ENCODE measurements at regions of chr2 and their contacts with region 1.

Region 1: GRCh38 chr2:19362755-19363473 is 4.5 kb upstream of the OSR1 start:
- DNase-seq: peak; percentile 70
- H3K4me3 Mint-ChIP-seq: peak overlapping the region; percentile 92
- H3K27ac Mint-ChIP-seq: no peak overlapping the region
- H3K4me1 Mint-ChIP-seq: peaks cover 28% of the 10 kb centered on the region
- H3K27me3 Mint-ChIP-seq: peaks cover 56% of the 10 kb centered on the region

Region 2: GRCh38 chr2:18387441-18388206 is 975.3 kb before region 1 on chr2:
- CTCF ChIA-PET with region 1: no interaction called
- intact Hi-C with region 1: loop called (anchors 5 kb)
- DNase-seq: peak; percentile 74
- H3K4me3 Mint-ChIP-seq: no peak overlapping the region
- H3K27ac Mint-ChIP-seq: no peak overlapping the region
- H3K4me1 Mint-ChIP-seq: no peaks in the 10 kb centered on the region
- H3K27me3 Mint-ChIP-seq: no peaks in the 10 kb centered on the region

Region 3: DNA sequence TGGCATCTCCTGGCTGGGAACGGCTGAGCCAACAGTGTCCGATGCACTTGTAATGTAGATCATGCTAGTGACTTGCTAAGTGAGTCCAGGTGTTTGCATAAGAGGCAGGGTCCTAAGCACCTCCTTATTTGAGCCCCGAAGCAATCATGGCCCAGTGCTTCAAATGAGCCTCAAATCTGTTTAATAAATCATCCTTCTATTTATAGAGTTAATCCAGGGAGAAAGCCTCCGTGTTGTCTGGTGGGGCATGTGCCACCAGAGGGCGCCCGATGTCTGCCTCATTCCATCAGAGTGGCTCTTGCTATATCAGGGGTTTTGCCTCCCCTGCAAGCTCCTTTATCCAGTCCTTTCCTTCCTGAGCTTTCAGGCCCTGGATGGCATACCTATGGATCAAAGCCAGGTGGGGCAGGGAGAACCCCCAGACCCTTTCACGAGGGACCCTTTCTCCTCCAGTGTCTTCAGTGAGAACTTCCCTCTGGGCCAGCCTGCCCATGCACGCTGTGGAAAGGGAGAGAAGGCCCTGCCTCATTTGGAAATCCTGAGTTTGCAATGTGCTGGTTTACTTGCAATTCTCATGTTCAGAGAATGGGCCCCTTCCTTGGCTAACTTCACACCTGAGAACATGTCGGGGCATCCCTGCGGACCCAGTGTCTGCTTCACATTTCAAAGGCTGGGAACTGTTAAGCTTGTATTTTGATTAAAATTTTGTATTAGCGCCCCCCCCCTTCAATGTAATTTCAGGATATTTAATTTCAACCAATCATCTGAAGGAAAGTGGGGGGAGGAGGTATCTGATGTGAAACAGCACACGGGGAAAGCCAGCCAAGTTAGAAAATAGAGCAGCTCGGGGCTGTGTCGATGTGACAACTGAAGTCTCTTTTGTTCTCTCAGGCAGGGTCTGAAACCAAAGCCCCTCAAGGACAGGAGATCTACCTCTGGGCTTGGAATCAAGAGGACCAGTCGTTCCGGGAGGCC is 842.2 kb before region 1 on chr2:
- CTCF ChIA-PET with region 1: interaction called, 4 read pairs
- intact Hi-C with region 1: loop called (anchors 1 kb)
- DNase-seq: peak; percentile 81
- H3K4me3 Mint-ChIP-seq: no peak overlapping the region
- H3K27ac Mint-ChIP-seq: no peak overlapping the region
- H3K4me1 Mint-ChIP-seq: no peaks in the 10 kb centered on the region
- H3K27me3 Mint-ChIP-seq: peaks cover 18% of the 10 kb centered on the region

Region 4: GRCh38 chr2:18749912-18750526 is 612.9 kb before region 1 on chr2:
- CTCF ChIA-PET with region 1: no interaction called
- intact Hi-C with region 1: loop called (anchors 1 kb)
- DNase-seq: peak; percentile 75
- H3K4me3 Mint-ChIP-seq: no peak overlapping the region
- H3K27ac Mint-ChIP-seq: no peak overlapping the region
- H3K4me1 Mint-ChIP-seq: no peaks in the 10 kb centered on the region
- H3K27me3 Mint-ChIP-seq: no peaks in the 10 kb centered on the region

Region 5: DNA sequence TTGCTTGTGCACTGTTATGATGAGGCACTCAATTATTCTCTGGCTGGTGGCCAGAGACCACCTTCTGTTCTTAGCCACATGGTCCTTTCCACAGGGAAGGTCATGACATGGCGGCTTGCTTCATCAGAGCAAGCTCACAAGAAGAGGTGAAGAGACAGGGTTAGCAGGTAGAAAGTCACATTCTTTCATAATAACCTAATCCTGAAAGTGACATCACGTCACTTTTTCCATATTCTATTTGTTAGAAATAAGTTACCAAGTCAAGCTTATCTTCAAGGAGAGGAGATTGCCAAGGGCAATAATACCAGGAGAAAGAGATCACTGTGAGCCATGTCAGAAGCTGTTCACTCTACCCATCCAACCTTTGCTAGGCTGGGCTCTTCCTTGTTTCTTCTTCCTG is 143.9 kb before region 1 on chr2:
- CTCF ChIA-PET with region 1: no interaction called
- intact Hi-C with region 1: no loop called
- DNase-seq: no peak
- H3K4me3 Mint-ChIP-seq: no peak overlapping the region
- H3K27ac Mint-ChIP-seq: no peak overlapping the region
- H3K4me1 Mint-ChIP-seq: peaks cover 4% of the 10 kb centered on the region
- H3K27me3 Mint-ChIP-seq: no peaks in the 10 kb centered on the region

Region 6: GRCh38 chr2:19347619-19348562 is 15.0 kb before region 1 on chr2:
- CTCF ChIA-PET with region 1: interaction called, 42 read pairs
- intact Hi-C with region 1: loop called (anchors 1 kb)
- DNase-seq: peak; percentile 94
- H3K4me3 Mint-ChIP-seq: peak overlapping the region; percentile 95
- H3K27ac Mint-ChIP-seq: peak overlapping the region; percentile 96
- H3K4me1 Mint-ChIP-seq: peaks cover 26% of the 10 kb centered on the region
- H3K27me3 Mint-ChIP-seq: peaks cover 37% of the 10 kb centered on the region

Region 7: DNA sequence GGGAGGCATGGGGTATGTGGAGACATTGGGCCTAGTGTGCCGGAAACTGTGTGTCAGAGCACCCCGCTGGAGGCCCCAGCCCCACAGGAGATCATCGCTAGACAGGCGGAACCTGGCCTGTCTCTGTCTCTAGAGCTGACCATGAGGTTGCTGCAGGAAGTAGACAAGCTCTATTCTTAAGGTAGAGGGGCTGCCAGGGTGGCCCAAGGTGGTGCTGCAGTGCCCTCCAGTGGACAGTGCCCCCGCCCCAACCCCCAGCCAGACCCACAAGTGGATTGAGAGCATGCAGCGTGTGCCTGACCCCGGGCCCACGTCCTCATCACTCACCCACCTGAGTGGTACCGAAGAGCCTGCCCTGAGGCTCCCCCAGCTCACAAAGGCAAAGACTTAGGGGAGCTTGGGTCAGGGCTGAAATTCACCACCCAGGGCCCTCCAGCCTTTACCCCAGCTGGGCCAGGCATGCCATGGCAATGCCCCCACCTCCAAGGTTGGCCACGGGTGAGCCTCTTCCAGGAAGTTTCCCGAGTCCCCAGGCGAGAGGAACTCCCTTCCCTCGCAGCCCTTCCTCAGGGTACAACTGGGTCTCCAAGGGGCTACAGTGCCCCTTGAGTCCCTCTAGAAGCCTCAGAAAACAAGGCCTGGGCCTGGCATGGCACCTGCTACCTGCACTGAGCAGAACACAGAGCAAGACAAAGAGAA is 383.8 kb after region 1 on chr2:
- CTCF ChIA-PET with region 1: no interaction called
- intact Hi-C with region 1: loop called (anchors 10 kb)
- DNase-seq: peak; percentile 17
- H3K4me3 Mint-ChIP-seq: no peak overlapping the region
- H3K27ac Mint-ChIP-seq: no peak overlapping the region
- H3K4me1 Mint-ChIP-seq: no peaks in the 10 kb centered on the region
- H3K27me3 Mint-ChIP-seq: peaks cover 7% of the 10 kb centered on the region

Measured in activated naive CD4-positive, alpha-beta T cell treated with anti-CD3 and anti-CD28 coated beads for 36 hours (primary cell).